Activated CD8-positive, alpha-beta T cell treated with anti-CD3 and anti-CD28 coated beads, Interleukin-2, amount 10 ng/mL, durations not matched to agents 7 days and 5 days (primary cell): ENCODE measurements at regions of chr16 and their contacts with region 1.

Region 1: GRCh38 chr16:29995911-29996772 is at the start of gene INO80E:
- DNase-seq: peak; percentile 100
- ATAC-seq: peak; percentile 94
- H3K4me3 Mint-ChIP-seq: peak within 1 kb of the TSS; percentile 99
- H3K27ac Mint-ChIP-seq: peak within 1 kb of the TSS; percentile 96
- H3K4me1 Mint-ChIP-seq: peaks cover 33% of the 10 kb centered on the region
- H3K27me3 Mint-ChIP-seq: no peaks in the 10 kb centered on the region
- total RNA-seq, gene INO80E: 104 to 117 TPM

Region 2: GRCh38 chr16:29926005-29926710 is 70.0 kb before region 1 on chr16 and contains the start of gene KCTD13:
- CTCF ChIA-PET with region 1: no interaction called
- POLR2A ChIA-PET with region 1: interaction called, 14 read pairs
- DNase-seq: peak; percentile 88
- ATAC-seq: peak; percentile 94
- H3K4me3 Mint-ChIP-seq: peak within 1 kb of the TSS; percentile 85
- H3K27ac Mint-ChIP-seq: peak within 1 kb of the TSS; percentile 93
- H3K4me1 Mint-ChIP-seq: peaks cover 29% of the 10 kb centered on the region
- H3K27me3 Mint-ChIP-seq: peaks cover 2% of the 10 kb centered on the region
- total RNA-seq, gene KCTD13: 33.8 to 35.5 TPM

Region 3: GRCh38 chr16:29961479-29962343 is 34.4 kb before region 1 on chr16 and contains the start of gene TMEM219:
- CTCF ChIA-PET with region 1: no interaction called
- POLR2A ChIA-PET with region 1: interaction called, 12 read pairs
- DNase-seq: peak; percentile 94
- ATAC-seq: peak; percentile 95
- H3K4me3 Mint-ChIP-seq: peak within 1 kb of the TSS; percentile 82
- H3K27ac Mint-ChIP-seq: peak within 1 kb of the TSS; percentile 84
- H3K4me1 Mint-ChIP-seq: peaks cover 20% of the 10 kb centered on the region
- H3K27me3 Mint-ChIP-seq: no peaks in the 10 kb centered on the region
- total RNA-seq, gene TMEM219: 57.8 to 61.0 TPM

Region 4: GRCh38 chr16:29985271-29985811 is 10.8 kb before region 1 on chr16:
- CTCF ChIA-PET with region 1: interaction called, 4 read pairs
- POLR2A ChIA-PET with region 1: interaction called, 10 read pairs
- DNase-seq: no peak
- ATAC-seq: no peak
- H3K4me3 Mint-ChIP-seq: no peak overlapping the region
- H3K27ac Mint-ChIP-seq: no peak overlapping the region
- H3K4me1 Mint-ChIP-seq: no peaks in the 10 kb centered on the region
- H3K27me3 Mint-ChIP-seq: no peaks in the 10 kb centered on the region